CD8-positive, alpha-beta T cell (primary cell): ENCODE measurements at regions of chr22 and their contacts with region 1.

Region 1: DNA sequence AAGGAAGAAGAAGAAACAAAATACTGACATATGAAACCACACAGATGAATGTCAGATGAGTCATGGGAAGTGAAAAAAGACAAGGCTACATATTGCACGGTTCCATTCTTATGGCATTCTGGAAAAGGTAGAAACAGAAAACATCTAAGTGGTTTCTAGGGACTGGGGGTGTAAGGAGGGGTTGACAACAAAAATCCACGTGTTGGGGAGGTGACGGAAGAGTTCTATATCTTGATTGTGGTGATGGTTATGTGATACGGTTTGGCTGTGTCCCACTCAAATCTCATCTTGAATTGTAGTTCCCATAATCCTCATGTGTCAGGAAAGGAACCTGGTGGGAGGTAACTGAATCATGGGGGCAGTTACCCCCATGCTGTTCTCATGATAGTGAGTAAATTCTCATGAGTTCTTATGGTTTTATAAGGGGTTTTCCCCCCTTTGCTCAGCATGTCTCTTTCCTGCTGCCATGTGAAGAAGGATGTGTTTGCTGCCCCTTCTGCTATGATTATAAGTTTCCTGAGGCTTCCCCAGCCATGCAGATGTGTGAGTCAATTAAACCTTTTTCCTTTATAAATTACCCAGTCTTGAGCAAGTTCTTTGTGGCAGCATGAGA is 6.4 kb upstream of the ARFGAP3 start:
- DNase-seq: peak in 2 of 9 experiments; percentile 32
- ATAC-seq: peak; percentile 45
- H3K4me3 ChIP-seq: no peak overlapping the region
- H3K4me3 Mint-ChIP-seq: no peak overlapping the region
- H3K27ac ChIP-seq: no peak overlapping the region
- H3K27ac Mint-ChIP-seq: no peak overlapping the region
- H3K4me1 ChIP-seq: no peaks in the 10 kb centered on the region
- H3K4me1 Mint-ChIP-seq: peaks cover 12% of the 10 kb centered on the region
- H3K27me3 ChIP-seq: no peaks in the 10 kb centered on the region
- H3K27me3 Mint-ChIP-seq: no peaks in the 10 kb centered on the region
- CTCF ChIP-seq: no peak

Region 2: DNA sequence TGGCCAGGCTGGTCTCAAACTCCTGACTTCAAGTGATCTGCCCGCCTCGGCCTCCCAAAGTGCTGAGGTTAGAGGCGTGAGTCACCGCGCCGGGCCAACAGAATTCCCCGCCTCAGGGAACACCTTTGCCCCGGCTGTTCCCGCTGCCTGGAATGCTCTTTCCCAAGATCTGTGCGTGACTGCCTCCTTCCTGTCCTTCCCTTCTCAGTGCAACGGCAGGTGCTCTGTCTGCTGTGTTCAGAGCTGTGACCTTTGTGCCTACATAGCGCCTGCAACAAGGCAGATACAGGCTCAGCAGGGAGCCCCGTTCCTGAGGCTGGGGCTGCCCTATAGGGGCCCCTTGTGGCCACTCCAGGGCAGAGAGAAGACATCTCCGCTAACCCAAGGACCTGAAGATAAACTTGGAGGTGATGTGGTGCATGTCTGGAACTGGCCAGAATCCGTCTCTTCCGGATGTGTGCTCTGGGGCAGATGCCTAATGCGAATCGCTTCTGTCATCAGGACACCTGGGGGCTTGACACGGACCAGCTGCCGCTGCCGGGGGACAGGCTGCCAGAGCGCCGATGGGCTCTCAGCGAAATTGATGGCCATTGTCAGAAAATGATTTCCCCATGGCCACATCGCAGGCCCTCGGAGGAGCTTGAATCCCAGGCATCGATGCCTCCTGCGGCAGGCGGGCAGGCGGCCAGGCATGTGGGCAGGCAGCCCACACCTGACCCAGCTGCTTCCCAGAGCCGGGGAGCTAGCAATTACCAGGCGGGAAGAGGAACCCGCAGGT is 549.5 kb before region 1 on chr22:
- CTCF ChIA-PET with region 1: no interaction called
- POLR2A ChIA-PET with region 1: no interaction called
- intact Hi-C with region 1: no loop called
- DNase-seq: peak in 6 of 9 experiments; percentile 33 to 71 (median 44)
- ATAC-seq: peak; percentile 50
- H3K4me3 ChIP-seq: no peak overlapping the region
- H3K4me3 Mint-ChIP-seq: no peak overlapping the region
- H3K27ac ChIP-seq: peak overlapping the region in 1 of 2 experiments; percentile 50
- H3K27ac Mint-ChIP-seq: no peak overlapping the region
- H3K4me1 ChIP-seq: peaks cover 85% of the 10 kb centered on the region
- H3K4me1 Mint-ChIP-seq: peaks cover 45% of the 10 kb centered on the region
- H3K27me3 ChIP-seq: no peaks in the 10 kb centered on the region
- H3K27me3 Mint-ChIP-seq: no peaks in the 10 kb centered on the region
- CTCF ChIP-seq: peak; percentile 32

Region 3: GRCh38 chr22:42895087-42895486 is 31.6 kb after region 1 on chr22:
- CTCF ChIA-PET with region 1: interaction called, 11 read pairs
- POLR2A ChIA-PET with region 1: no interaction called
- intact Hi-C with region 1: no loop called
- DNase-seq: peak in 4 of 9 experiments; percentile 17 to 83 (median 44)
- ATAC-seq: peak; percentile 81
- H3K4me3 ChIP-seq: no peak overlapping the region
- H3K4me3 Mint-ChIP-seq: no peak overlapping the region
- H3K27ac ChIP-seq: peak overlapping the region; percentile 8 to 84
- H3K27ac Mint-ChIP-seq: peak overlapping the region; percentile 78
- H3K4me1 ChIP-seq: peaks cover 31% of the 10 kb centered on the region
- H3K4me1 Mint-ChIP-seq: peaks cover 33% of the 10 kb centered on the region
- H3K27me3 ChIP-seq: no peaks in the 10 kb centered on the region
- H3K27me3 Mint-ChIP-seq: no peaks in the 10 kb centered on the region
- CTCF ChIP-seq: no peak